ENCODE measurements at regions of chr17 and their contacts with region 1.

Region 1: DNA sequence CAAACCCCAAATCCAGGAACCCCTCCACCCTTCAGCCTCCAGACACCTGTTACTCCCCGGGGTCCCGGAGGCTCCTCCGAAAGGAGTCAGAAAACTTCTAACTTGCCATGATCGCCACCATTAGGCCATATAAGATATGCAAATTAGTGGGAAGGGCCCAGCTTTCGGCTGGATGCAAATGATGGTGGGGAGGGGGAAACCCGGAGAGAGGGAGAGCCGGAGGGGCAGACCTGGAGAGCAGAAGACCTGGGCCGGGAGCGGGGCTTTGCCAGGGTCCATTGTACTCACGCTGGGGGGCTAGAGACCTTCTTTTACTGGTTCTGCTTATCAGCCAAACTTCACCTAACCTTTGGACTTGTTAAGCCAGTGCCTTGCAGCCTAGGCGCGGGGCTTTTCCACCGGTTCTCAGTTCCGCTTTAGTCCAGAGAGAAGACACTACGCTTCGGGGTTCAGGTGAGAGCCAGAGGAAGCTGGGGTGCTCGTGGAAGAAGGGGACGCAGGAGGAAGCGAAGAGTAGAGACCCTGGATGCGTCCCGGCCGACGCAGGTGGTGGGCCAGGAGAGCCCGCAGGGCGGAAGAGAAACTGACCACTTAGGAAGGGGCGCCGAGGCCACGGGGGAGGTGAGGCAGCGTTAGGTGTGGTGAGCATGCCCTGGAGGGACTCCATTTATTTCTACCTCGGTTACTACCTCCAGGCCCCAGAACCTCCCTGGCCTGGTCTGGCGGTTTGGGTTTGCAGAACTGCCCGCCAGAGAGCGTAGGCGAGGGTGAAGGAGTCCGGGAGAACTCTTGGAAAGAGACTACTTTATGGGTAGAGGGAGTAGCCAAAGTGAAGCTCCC is at the start of gene HNF1B:
- DNase-seq: peak; percentile 97
- H3K4me3 Mint-ChIP-seq: peak within 1 kb of the TSS; percentile 100
- H3K27ac Mint-ChIP-seq: peak within 1 kb of the TSS; percentile 99
- H3K4me1 Mint-ChIP-seq: peaks cover 39% of the 10 kb centered on the region
- H3K27me3 Mint-ChIP-seq: no peaks in the 10 kb centered on the region
- CTCF ChIP-seq: peak; percentile 10
- total RNA-seq, gene HNF1B: 127 and 130 TPM in 2 replicates

Region 2: GRCh38 chr17:37710344-37710886 is 34.8 kb before region 1 on chr17:
- CTCF ChIA-PET with region 1: interaction called, 65 read pairs
- intact Hi-C with region 1: loop called (anchors 2 kb)
- DNase-seq: peak; percentile 100
- H3K4me3 Mint-ChIP-seq: peak overlapping the region; percentile 63
- H3K27ac Mint-ChIP-seq: peak overlapping the region; percentile 97
- H3K4me1 Mint-ChIP-seq: peaks cover 100% of the 10 kb centered on the region
- H3K27me3 Mint-ChIP-seq: no peaks in the 10 kb centered on the region
- CTCF ChIP-seq: peak; percentile 89

Region 3: GRCh38 chr17:37717627-37718323 is 27.4 kb before region 1 on chr17:
- CTCF ChIA-PET with region 1: interaction called, 26 read pairs
- intact Hi-C with region 1: no loop called
- DNase-seq: no peak
- H3K4me3 Mint-ChIP-seq: peak overlapping the region; percentile 17
- H3K27ac Mint-ChIP-seq: peak overlapping the region; percentile 85
- H3K4me1 Mint-ChIP-seq: peaks cover 86% of the 10 kb centered on the region
- H3K27me3 Mint-ChIP-seq: no peaks in the 10 kb centered on the region
- CTCF ChIP-seq: no peak

Region 4: GRCh38 chr17:37759014-37759637 is 13.9 kb after region 1 on chr17:
- CTCF ChIA-PET with region 1: interaction called, 17 read pairs
- intact Hi-C with region 1: no loop called
- DNase-seq: no peak
- H3K4me3 Mint-ChIP-seq: no peak overlapping the region
- H3K27ac Mint-ChIP-seq: no peak overlapping the region
- H3K4me1 Mint-ChIP-seq: no peaks in the 10 kb centered on the region
- H3K27me3 Mint-ChIP-seq: no peaks in the 10 kb centered on the region
- CTCF ChIP-seq: no peak

Region 5: GRCh38 chr17:37781451-37781850 is 36.3 kb after region 1 on chr17:
- CTCF ChIA-PET with region 1: no interaction called
- intact Hi-C with region 1: no loop called
- DNase-seq: no peak
- H3K4me3 Mint-ChIP-seq: no peak overlapping the region
- H3K27ac Mint-ChIP-seq: no peak overlapping the region
- H3K4me1 Mint-ChIP-seq: peaks cover 3% of the 10 kb centered on the region
- H3K27me3 Mint-ChIP-seq: no peaks in the 10 kb centered on the region
- CTCF ChIP-seq: no peak

Measured in Calu3 (cell line).